Transverse colon (tissue), 4 donors: ENCODE measurements at regions of chr2 and their contacts with region 1.

Region 1: DNA sequence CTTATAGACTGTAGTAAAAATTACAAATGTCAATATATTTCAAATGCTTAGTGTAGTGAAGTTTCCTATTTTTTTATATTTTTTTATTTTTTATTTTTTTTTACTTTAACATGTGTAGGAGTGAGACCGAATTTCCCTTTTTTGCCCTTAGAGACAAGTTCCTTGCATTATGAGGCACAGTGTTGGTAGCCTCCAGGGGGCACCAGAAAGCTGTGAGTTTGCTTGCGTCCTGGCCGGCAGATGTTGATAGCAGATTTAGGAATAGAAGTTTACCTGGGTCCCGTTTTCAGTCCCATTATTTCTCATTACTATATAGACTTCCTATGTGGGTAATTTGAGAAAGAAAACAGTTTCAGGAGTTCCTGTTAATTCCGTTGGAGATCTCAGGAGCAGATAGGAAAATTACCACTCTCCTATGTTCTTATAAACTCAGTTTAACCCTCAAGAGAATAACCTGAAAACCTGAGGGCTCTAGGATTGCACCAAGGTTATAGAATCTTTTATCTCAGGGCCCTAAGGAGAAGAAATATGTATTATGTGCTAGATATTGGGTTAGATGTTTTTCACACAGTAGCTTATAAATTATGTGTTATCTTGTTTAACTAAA is 157.5 kb upstream of the SESTD1 start:
- DNase-seq: peak; percentile 75
- H3K4me3 ChIP-seq: no peak overlapping the region
- H3K27ac ChIP-seq: no peak overlapping the region
- H3K4me1 ChIP-seq: no peaks in the 10 kb centered on the region
- H3K27me3 ChIP-seq: no peaks in the 10 kb centered on the region
- CTCF ChIP-seq: peak; percentile 65 to 74 (median 72)
- EP300 ChIP-seq: no peak
- POLR2A ChIP-seq: no peak

Region 2: DNA sequence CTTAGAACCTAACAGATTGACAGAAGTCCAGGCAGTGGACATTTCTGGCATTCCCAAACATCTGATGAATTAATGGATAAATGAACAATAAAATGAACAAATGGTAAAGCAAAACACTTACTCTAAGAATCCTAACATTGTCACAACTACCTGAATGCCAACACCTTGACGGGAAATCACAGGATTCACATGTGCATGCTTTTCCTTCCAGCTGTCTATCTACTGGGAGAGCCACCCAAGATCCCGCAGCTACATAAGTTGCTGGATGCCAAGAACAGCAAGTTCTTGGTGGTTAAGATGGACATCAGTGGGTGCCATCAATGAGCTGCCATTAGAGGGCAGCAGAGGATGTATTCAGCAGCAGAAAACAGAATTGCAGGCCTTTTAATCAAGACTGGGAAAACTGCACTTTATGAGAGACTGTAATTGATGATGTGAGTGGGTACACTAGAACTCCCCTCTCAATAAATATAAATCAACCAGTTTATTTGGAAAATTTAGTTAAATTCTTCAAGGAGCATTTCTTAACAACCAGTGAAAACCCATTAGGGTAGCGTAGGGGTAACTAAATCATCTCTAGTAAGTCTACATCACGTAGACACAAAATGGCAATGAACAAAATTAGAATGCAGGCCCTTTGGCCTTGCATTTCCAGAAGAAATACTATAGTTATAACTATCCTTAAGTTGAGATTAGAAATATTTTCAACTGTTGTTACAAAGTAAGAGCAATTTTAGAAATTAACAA is 203.1 kb before region 1 on chr2:
- in situ Hi-C with region 1: loop called in 2 of 4 experiments (anchors 10 to 25 kb)
- intact Hi-C with region 1: no loop called
- DNase-seq: peak; percentile 70
- H3K4me3 ChIP-seq: no peak overlapping the region
- H3K27ac ChIP-seq: no peak overlapping the region
- H3K4me1 ChIP-seq: peaks cover 0 to 17% (median 0%) of the 10 kb centered on the region in 4 donors
- H3K27me3 ChIP-seq: no peaks in the 10 kb centered on the region
- CTCF ChIP-seq: peak; percentile 65 to 89 (median 78)
- EP300 ChIP-seq: no peak
- POLR2A ChIP-seq: no peak

Region 3: GRCh38 chr2:179332904-179333303 is 89.2 kb before region 1 on chr2:
- in situ Hi-C with region 1: no loop called
- intact Hi-C with region 1: no loop called
- DNase-seq: no peak
- H3K4me3 ChIP-seq: no peak overlapping the region
- H3K27ac ChIP-seq: no peak overlapping the region
- H3K4me1 ChIP-seq: no peaks in the 10 kb centered on the region
- H3K27me3 ChIP-seq: no peaks in the 10 kb centered on the region
- CTCF ChIP-seq: no peak
- EP300 ChIP-seq: no peak
- POLR2A ChIP-seq: no peak

Region 4: DNA sequence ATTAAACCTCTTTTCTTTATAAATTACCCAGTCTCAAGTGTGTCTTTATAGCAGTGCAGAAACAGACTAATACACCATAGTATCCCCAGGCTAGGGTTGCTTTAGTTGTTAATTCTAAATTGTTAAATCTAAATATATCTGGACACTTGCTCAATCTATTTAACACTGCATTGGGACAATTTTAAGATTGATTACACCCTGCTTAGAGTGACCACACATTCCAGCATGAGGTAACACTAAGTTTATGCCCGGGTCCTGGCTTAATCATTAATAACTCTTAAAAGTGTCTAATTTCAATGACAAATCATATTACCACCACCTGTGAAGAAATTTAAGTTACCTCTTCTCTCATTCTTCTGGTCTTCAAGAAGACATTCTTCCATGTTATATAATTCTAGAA is 307.8 kb after region 1 on chr2:
- in situ Hi-C with region 1: loop called in 1 of 4 experiments (anchors 10 kb)
- intact Hi-C with region 1: no loop called
- DNase-seq: no peak
- H3K4me3 ChIP-seq: no peak overlapping the region
- H3K27ac ChIP-seq: no peak overlapping the region
- H3K4me1 ChIP-seq: no peaks in the 10 kb centered on the region
- H3K27me3 ChIP-seq: no peaks in the 10 kb centered on the region
- CTCF ChIP-seq: no peak
- EP300 ChIP-seq: no peak
- POLR2A ChIP-seq: no peak

Region 5: DNA sequence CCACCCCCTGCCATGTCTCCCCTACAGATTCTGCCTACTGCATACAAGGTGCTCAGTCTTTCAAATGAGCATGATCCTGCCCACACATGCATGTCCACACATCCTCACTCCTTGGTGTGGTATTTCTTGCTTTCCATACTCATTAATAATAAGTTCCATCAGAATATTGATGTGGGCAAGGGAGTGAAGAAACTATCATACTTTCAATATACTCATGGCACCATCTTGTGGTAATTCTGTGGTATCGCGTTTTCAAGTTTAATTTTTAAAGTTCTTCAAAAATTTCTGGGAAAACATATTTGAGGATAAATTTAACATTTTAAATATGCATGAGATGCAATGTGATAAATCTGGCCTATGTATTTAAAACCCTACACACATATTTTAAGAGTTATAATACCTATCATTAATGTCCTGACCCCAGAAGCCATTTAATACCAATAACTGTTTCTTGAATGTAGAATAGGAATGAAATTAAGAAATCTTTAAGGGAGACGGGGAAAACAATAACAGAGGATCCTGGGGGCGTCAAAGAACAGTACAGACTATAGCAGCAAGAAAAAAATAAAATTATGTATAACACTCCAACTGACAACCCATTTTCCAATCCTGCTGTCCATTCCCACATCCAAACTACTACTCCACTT is 329.1 kb after region 1 on chr2:
- in situ Hi-C with region 1: loop called in 3 of 4 experiments (anchors 10 kb)
- intact Hi-C with region 1: loop called (anchors 10 kb)
- DNase-seq: no peak
- H3K4me3 ChIP-seq: no peak overlapping the region
- H3K27ac ChIP-seq: no peak overlapping the region
- H3K4me1 ChIP-seq: no peaks in the 10 kb centered on the region
- H3K27me3 ChIP-seq: no peaks in the 10 kb centered on the region
- CTCF ChIP-seq: peak; percentile 52 to 66 (median 59)
- EP300 ChIP-seq: no peak
- POLR2A ChIP-seq: no peak